Breast epithelium (tissue), 4 donors: ENCODE measurements at regions of chr13 and their contacts with region 1.

Region 1: DNA sequence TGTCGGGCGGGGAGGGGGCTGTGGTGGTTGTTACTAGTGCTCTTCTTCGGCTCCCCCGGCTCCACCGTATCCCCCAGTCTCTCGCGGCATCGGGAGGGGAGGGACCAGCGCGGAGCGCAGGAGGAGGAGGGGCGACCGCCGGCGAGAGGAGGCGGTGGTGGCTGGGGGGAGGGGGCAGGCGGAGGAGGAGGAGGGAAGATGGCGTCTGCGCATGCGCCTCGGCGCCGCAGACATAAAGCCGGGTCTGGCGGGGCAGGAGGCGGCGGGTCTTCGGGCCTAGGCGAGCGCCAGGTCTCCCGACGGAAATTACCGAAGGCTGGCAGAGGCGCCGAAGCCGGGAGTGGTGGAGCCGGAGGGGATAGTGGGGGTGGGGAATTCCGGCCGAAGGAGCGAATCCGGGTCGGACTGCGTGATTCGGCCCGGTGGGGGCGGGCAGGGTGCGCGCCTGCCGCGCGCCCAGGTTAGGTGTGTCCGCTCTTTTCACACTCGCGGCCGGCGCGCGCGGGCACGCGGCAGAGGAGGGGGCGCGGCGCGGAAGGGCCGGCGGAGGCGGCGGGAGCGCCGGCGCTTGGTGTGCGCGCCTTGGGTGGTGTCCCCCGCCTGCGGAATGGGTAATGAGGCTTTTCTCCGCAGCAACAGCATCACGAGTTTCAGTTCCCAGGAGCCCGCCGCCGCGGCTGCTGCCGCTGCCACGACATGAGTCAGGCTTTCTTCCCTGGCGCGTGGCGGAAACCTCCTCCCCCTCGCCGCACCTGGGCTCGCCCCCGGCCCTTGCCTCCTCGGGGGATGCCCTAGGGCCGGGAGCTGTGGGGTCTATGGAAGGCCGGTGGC is 1.3 kb upstream of the TSC22D1 start:
- DNase-seq: peak; percentile 93 to 95
- H3K4me3 ChIP-seq: peak overlapping the region; percentile 86 to 95 (median 89)
- H3K27ac ChIP-seq: peak overlapping the region; percentile 97 to 99
- H3K4me1 ChIP-seq: no peaks in the 10 kb centered on the region
- H3K27me3 ChIP-seq: no peaks in the 10 kb centered on the region
- CTCF ChIP-seq: no peak
- POLR2A ChIP-seq: peak; percentile 9

Region 2: GRCh38 chr13:44549461-44549860 is 28.0 kb before region 1 on chr13:
- intact Hi-C with region 1: loop called (anchors 1 kb)
- DNase-seq: no peak
- H3K4me3 ChIP-seq: no peak overlapping the region
- H3K27ac ChIP-seq: no peak overlapping the region
- H3K4me1 ChIP-seq: no peaks in the 10 kb centered on the region
- H3K27me3 ChIP-seq: no peaks in the 10 kb centered on the region
- CTCF ChIP-seq: no peak
- POLR2A ChIP-seq: no peak